Panc1 (cell line): ENCODE measurements at regions of chr6 and their contacts with region 1.

Region 1: GRCh38 chr6:110528101-110528929 is 51.9 kb upstream of the SLC22A16 start:
- DNase-seq: peak; percentile 86
- ATAC-seq: peak; percentile 85
- H3K4me3 ChIP-seq: no peak overlapping the region
- H3K27ac ChIP-seq: peak overlapping the region; percentile 58; the same call in 1 of the 2 replicates
- H3K4me1 ChIP-seq: peaks cover 17% of the 10 kb centered on the region
- H3K27me3 ChIP-seq: no peaks in the 10 kb centered on the region
- CTCF ChIP-seq: peak; percentile 90

Region 2: GRCh38 chr6:110682460-110682853 is 154.1 kb after region 1 on chr6:
- CTCF ChIA-PET with region 1: no interaction called
- POLR2A ChIA-PET with region 1: no interaction called
- in situ Hi-C with region 1: loop called (anchors 10 kb)
- intact Hi-C with region 1: loop called (anchors 5 kb)
- DNase-seq: peak; percentile 92
- ATAC-seq: peak; percentile 99
- H3K4me3 ChIP-seq: no peak overlapping the region
- H3K27ac ChIP-seq: no peak overlapping the region; the same call in 1 of the 2 replicates
- H3K4me1 ChIP-seq: peaks cover 13% of the 10 kb centered on the region
- H3K27me3 ChIP-seq: no peaks in the 10 kb centered on the region
- CTCF ChIP-seq: peak; percentile 89

Region 3: DNA sequence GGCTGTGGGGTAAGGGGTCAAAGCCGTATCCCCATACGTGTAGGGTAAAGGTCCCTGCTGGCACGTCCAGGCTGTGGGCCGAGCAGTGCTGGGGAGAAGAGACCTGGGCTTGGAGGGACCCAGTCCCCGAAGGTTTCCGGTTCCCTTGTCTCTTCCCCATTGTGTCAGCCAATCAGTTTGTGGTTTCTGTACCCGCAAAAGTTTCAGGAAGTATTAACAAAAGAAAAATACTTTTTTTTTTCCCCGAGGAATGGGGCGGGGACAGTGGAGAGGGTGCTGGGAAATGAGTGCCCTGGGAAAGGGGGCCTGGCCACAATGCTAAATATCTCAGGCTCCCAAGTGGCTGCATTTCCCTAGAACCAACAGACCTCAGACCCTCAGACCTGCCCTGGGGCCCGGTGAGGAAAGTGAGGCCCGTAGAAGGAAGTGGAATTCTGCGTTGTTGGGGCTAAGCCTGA is 331.0 kb after region 1 on chr6:
- CTCF ChIA-PET with region 1: no interaction called
- POLR2A ChIA-PET with region 1: no interaction called
- in situ Hi-C with region 1: no loop called
- intact Hi-C with region 1: no loop called
- DNase-seq: no peak
- ATAC-seq: no peak
- H3K4me3 ChIP-seq: no peak overlapping the region
- H3K27ac ChIP-seq: no peak overlapping the region
- H3K4me1 ChIP-seq: no peaks in the 10 kb centered on the region
- H3K27me3 ChIP-seq: no peaks in the 10 kb centered on the region
- CTCF ChIP-seq: no peak

Region 4: DNA sequence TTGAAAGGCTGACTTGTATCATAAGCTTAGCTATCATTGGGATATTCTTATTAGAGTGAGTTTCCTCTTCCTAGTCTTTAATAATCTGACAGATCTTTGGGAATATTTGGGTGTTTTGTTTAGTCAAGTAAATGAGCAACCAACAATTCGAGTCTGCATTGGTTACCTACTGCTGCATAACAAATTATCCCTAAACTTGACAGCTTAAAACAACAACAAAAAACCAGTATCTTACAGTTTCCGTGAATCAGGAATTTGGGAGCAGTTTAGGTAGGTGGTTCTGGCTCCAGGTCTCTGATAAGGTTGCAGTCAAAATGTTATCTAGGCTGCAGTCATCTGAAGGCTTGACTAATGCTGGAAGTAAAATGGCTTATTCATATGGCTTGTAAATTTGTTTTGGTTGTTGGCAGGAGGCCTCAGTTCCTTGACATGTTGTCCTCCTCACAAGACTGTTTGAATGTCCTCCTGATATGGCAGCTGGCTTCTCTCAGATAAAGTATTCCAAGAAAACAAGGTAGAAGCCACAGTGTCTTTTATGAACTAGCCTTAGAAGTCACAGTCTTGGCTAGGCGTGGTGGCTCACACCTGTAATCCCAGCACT is 437.4 kb after region 1 on chr6:
- CTCF ChIA-PET with region 1: interaction called, 18 read pairs
- POLR2A ChIA-PET with region 1: interaction called, 3 read pairs
- in situ Hi-C with region 1: no loop called
- intact Hi-C with region 1: no loop called
- DNase-seq: no peak
- ATAC-seq: no peak
- H3K4me3 ChIP-seq: no peak overlapping the region
- H3K27ac ChIP-seq: no peak overlapping the region
- H3K4me1 ChIP-seq: no peaks in the 10 kb centered on the region
- H3K27me3 ChIP-seq: no peaks in the 10 kb centered on the region
- CTCF ChIP-seq: no peak